ENCODE measurements at regions of chr3 and their contacts with region 1.

Region 1: DNA sequence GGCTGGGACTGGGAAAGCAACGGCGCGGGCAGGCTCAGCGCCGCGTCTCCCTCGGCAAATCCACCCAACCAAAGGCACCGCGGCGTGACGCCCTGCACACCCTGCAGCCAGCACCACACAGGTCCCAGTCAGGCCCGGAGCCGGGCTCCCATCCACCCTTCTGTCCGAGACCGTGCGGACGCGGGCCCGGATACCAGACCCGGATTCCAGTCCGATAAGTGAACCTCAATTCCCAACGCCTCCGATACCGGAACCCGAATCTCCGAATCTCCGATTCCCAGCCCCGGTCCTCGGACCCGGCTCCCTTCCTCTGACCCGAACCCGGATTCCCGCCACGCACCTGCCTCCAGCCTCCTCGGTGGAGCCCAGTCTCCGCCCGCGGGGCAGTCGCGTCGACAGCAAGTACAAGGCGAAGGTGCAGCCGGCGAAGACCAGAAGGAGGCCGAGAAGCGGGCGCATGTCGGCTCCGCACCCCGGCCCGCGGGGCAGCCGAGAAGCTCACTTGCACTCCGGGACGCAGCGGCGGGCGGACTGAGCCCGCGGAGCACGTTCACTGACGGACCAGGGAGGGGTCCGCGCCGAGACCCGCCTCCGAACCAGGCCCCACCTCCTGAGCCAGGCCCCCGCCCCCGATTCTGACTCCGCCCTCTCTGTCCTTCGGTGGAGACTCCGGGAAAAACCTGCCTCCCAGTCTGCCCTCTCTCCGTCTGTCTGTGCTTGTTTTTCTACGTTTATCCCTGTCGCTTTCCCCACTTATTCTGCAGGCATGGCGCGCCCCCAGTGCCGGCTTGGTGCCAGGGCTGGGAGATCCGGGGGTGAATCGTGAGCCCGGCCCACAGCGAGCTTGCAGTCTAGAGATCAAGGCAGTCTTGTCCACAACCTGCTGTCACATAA is at the start of gene TMEM41A:
- DNase-seq: peak; percentile 94 to 96
- H3K4me3 ChIP-seq: peak within 1 kb of the TSS; percentile 90
- H3K4me3 Mint-ChIP-seq: peak within 1 kb of the TSS; percentile 76
- H3K27ac Mint-ChIP-seq: peak within 1 kb of the TSS; percentile 71
- H3K4me1 ChIP-seq: peaks cover 14% of the 10 kb centered on the region
- H3K4me1 Mint-ChIP-seq: no peaks in the 10 kb centered on the region
- H3K27me3 ChIP-seq: no peaks in the 10 kb centered on the region
- H3K27me3 Mint-ChIP-seq: no peaks in the 10 kb centered on the region
- CTCF ChIP-seq: no peak
- total RNA-seq, gene TMEM41A: 39.0 and 39.4 TPM in 2 replicates

Region 2: GRCh38 chr3:185353823-185354614 is 144.7 kb before region 1 on chr3:
- CTCF ChIA-PET with region 1: no interaction called
- POLR2A ChIA-PET with region 1: no interaction called
- intact Hi-C with region 1: loop called (anchors 1 kb)
- DNase-seq: peak; percentile 89 to 91
- H3K4me3 ChIP-seq: no peak overlapping the region
- H3K4me3 Mint-ChIP-seq: no peak overlapping the region
- H3K27ac Mint-ChIP-seq: no peak overlapping the region
- H3K4me1 ChIP-seq: no peaks in the 10 kb centered on the region
- H3K4me1 Mint-ChIP-seq: no peaks in the 10 kb centered on the region
- H3K27me3 ChIP-seq: no peaks in the 10 kb centered on the region
- H3K27me3 Mint-ChIP-seq: no peaks in the 10 kb centered on the region
- CTCF ChIP-seq: peak; percentile 67 to 81

Region 3: GRCh38 chr3:185460719-185461350 is 37.9 kb before region 1 on chr3:
- CTCF ChIA-PET with region 1: interaction called, 5 read pairs
- POLR2A ChIA-PET with region 1: no interaction called
- intact Hi-C with region 1: loop called (anchors 2 kb)
- DNase-seq: peak in 1 of 2 experiments; percentile 34
- H3K4me3 ChIP-seq: no peak overlapping the region
- H3K4me3 Mint-ChIP-seq: no peak overlapping the region
- H3K27ac Mint-ChIP-seq: no peak overlapping the region
- H3K4me1 ChIP-seq: no peaks in the 10 kb centered on the region
- H3K4me1 Mint-ChIP-seq: no peaks in the 10 kb centered on the region
- H3K27me3 ChIP-seq: no peaks in the 10 kb centered on the region
- H3K27me3 Mint-ChIP-seq: no peaks in the 10 kb centered on the region
- CTCF ChIP-seq: peak; percentile 25 to 33

Region 4: GRCh38 chr3:185558395-185558794 is 59.6 kb after region 1 on chr3:
- CTCF ChIA-PET with region 1: interaction called, 7 read pairs
- POLR2A ChIA-PET with region 1: no interaction called
- intact Hi-C with region 1: loop called (anchors 5 kb)
- DNase-seq: peak; percentile 81 to 88
- H3K4me3 ChIP-seq: no peak overlapping the region
- H3K4me3 Mint-ChIP-seq: peak overlapping the region; percentile 88
- H3K27ac Mint-ChIP-seq: peak overlapping the region; percentile 97
- H3K4me1 ChIP-seq: peaks cover 35% of the 10 kb centered on the region
- H3K4me1 Mint-ChIP-seq: peaks cover 11% of the 10 kb centered on the region
- H3K27me3 ChIP-seq: no peaks in the 10 kb centered on the region
- H3K27me3 Mint-ChIP-seq: no peaks in the 10 kb centered on the region
- CTCF ChIP-seq: no peak

Region 5: DNA sequence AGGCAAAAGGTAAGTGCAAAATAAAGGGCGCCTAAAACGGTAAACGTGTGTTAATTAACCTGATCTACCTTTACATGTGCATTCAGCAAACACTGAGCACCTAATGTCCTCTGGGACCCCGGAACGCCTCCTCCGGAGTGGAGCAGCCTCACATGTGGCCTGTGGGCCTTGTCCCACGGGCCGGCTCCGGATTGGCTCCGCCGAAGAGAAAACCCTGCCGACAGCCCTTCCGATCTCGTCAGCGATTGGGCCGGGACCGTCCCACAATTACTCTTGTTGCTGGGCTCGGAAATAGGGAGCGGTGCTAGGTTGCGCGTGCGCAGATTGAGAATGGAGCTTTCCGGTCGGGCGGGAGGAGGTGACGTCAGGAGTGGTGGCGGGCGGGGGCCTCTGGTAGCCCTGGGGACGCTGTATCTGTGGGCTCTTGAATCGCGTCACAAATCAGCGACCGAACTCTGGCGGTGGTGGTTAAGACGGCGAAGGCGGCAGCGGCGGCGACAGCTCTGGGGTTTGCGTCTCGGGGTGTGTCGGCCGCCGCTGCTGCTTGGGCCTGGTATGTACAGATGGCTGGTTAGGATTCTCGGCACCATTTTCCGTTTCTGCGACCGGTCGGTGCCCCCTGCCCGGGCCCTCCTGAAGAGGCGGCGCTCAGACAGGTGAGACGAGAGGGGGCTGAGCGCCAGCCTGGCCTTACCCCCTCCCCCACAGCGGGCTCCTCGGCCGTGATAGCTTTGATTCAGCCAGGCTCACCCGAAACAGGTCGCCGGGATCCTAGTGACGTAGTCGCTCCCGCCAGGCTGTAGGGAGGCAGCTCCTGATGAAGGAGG is 87.3 kb after region 1 on chr3 and contains the start of gene SENP2:
- CTCF ChIA-PET with region 1: no interaction called
- POLR2A ChIA-PET with region 1: interaction called, 5 read pairs
- intact Hi-C with region 1: loop called (anchors 1 kb)
- DNase-seq: peak; percentile 99
- H3K4me3 ChIP-seq: peak within 1 kb of the TSS; percentile 74
- H3K4me3 Mint-ChIP-seq: peak within 1 kb of the TSS; percentile 95
- H3K27ac Mint-ChIP-seq: peak within 1 kb of the TSS; percentile 99
- H3K4me1 ChIP-seq: no peaks in the 10 kb centered on the region; the same call in 1 of the 2 replicates
- H3K4me1 Mint-ChIP-seq: no peaks in the 10 kb centered on the region
- H3K27me3 ChIP-seq: no peaks in the 10 kb centered on the region
- H3K27me3 Mint-ChIP-seq: no peaks in the 10 kb centered on the region
- CTCF ChIP-seq: no peak
- total RNA-seq, gene SENP2: 52.4 and 53.5 TPM in 2 replicates

Measured in Caco-2 (cell line).